HEK293T (cell line): ENCODE measurements at regions of chr10 and their contacts with region 1.

Region 1: DNA sequence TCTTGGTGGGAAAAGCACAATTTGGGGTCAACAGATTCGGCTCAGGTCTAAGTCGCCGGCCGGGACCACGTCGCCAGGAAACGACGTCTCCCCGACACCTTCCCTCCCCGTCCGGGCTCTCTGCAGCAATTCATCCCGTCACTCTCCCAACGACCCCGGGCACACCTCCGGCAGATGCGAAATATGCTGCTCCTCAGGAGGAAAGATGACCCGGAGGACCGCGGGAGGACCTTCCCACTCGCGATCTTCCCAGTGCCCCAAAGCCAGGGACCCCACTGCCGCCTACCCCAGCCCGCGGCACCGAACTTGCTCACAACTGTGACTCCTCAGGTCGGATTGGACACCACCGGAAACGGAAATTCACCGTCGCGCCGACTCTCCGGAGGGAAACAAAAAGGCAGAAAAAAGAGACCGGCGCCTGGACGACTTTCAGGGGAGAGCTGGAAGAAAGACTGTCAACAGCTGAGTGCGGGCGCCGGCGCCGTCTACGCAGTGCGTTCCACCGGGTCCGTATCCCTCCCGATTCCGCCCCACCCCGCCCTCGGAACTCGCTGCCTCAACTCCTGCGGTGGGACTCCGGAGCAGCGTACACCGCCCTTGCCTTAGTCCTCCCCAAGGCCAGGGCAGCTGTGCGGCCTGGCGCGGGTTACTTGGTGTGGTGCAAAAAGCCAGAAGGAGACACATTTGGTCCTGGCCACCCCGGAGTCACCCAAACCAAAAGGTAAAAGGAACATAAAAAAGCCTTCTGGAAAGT is 13.8 kb upstream of the SEC24C start:
- DNase-seq: peak; percentile 81

Region 2: GRCh38 chr10:73772280-73773151 is 42.2 kb after region 1 on chr10:
- CTCF ChIA-PET with region 1: no interaction called
- POLR2A ChIA-PET with region 1: interaction called, 22 read pairs
- DNase-seq: peak; percentile 63